ENCODE measurements at regions of chr16 and their contacts with region 1.

Region 1: DNA sequence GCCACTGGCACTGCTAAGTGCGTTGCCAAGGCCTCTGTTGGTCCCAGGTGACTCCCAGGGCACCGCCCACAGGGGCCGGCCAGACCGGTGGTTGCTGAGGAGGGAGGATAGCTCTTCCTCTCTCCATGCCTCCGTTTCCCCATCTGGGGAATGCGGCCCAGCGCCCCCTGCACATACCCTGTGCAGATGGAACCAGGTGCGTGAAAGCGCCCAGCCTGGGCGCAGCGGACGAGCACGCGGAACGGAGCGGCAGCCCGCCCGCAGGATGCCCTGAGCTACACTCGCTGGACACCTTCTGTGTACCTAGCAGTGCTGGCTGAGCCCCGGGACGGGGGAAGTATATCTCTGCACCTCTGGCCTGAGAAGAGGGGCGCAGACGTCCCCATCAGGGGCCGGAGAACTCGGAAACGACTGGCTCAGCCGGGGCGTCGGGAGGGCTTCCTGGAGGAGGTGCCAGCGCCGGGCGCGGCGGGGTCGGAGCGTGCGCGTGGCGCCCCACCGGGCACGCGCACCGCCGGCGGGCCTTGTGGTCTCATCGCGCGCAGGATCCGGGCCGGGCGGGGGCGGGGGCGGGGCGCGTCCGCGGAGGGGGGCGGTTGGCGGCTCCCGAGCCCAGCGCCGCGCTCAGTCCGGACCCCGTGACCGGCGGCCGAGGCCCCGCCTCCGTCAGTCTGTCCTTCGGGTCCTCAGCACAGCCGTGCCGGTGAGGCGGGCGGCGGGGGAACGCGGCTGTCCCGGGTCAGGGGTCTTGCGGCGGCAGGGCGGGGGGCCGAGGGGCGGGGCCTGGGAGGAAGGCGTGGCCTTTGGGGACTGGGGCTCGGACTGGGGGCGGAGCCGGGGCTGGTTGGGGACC is at the starts of genes CCDC78 and HAGHL:
- DNase-seq: peak; percentile 50
- H3K4me3 Mint-ChIP-seq: peak within 1 kb of the TSS; percentile 64
- H3K27ac Mint-ChIP-seq: no peak within 1 kb of the TSS
- H3K4me1 Mint-ChIP-seq: peaks cover 4% of the 10 kb centered on the region
- H3K27me3 Mint-ChIP-seq: no peaks in the 10 kb centered on the region
- total RNA-seq, gene CCDC78: 1.2 to 1.3 TPM
- total RNA-seq, gene HAGHL: 6.5 to 7.7 TPM

Region 2: GRCh38 chr16:714558-715476 is 11.8 kb before region 1 on chr16 and contains the start of gene METRN:
- CTCF ChIA-PET with region 1: interaction called, 25 read pairs
- intact Hi-C with region 1: no loop called
- DNase-seq: peak; percentile 87
- H3K4me3 Mint-ChIP-seq: peak within 1 kb of the TSS; percentile 53
- H3K27ac Mint-ChIP-seq: no peak within 1 kb of the TSS
- H3K4me1 Mint-ChIP-seq: peaks cover 10% of the 10 kb centered on the region
- H3K27me3 Mint-ChIP-seq: peaks cover 22% of the 10 kb centered on the region
- total RNA-seq, gene METRN: 8.2 to 11.0 TPM

Region 3: DNA sequence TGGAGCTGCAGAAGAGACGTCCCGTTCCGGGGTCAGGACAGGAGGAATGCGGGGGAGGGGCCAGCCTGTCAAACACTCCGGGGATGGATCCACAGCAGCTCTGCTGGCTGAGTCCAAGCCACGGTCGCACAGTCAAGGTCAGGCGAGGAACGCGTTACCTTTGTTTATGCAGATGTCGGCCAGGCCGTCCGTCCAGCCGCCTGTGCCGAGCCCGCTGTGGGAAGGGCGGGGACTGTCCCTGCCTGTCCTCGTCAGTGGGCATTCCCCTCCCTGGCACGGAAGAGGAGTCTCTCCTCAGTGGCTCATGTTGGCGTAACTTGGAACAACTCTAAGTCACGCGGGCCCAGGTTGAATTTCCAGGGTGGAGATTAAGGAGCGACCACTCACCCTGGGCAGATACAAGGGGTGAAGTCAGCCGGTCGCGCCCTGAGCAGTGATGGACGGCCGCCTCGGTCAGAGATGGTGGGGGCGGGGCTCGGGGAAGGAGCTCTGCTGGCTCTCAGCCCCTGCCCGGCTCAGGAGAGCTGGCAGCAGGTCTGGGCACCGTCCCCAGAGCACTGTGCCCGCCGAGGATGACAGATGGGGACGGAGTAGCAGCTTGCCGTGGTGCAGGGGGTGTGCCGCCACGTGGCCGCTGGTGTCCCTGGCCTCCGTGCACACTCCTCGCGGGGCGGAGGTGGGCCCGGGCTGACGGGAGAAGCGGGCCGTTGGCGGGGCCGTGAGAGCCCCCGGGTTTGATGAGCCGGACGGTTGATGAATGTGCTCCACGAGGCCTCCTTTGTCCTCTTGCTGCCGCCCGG is 433.5 kb after region 1 on chr16:
- CTCF ChIA-PET with region 1: no interaction called
- intact Hi-C with region 1: no loop called
- DNase-seq: no peak
- H3K4me3 Mint-ChIP-seq: no peak overlapping the region
- H3K27ac Mint-ChIP-seq: no peak overlapping the region
- H3K4me1 Mint-ChIP-seq: no peaks in the 10 kb centered on the region
- H3K27me3 Mint-ChIP-seq: peaks cover 12% of the 10 kb centered on the region